Colonic mucosa (tissue), 4 donors: ENCODE measurements at regions of chr17 and their contacts with region 1.

Region 1: DNA sequence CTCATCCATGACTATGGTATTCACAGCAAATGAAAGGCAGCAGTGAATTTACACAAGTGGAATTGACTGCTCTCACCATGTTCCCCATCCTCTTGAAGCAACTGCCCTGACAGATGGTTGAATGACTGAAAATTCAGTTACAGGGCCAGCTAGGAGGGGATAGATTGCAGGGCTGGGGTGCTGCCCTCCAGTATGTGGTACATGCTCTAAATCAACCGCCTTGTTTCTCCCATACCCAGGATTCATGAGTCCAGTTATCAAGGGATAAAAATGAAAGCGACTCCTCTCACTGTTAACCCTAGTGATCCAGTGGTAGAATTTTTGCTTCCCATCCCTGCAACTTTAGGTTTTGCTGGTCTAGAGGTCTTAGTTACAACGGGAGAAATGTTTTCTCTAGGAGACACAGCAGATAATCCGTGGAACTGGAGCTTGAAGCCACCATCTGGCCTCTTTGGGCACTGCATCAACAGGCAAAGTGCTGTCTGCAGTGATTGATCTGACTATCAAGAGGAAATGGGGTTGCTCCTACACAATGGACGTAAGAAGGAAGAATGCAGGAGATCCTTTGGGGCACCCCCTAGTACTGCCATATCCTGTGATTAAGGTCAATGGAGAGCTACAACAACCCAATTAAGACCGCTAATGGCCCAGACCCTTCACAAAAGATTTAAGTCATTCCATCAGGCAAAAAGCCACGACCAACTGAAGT is 32.0 kb downstream of the SCPEP1 start:
- DNase-seq: peak; percentile 68
- H3K4me3 ChIP-seq: no peak overlapping the region
- H3K27ac ChIP-seq: no peak overlapping the region
- H3K4me1 ChIP-seq: no peaks in the 10 kb centered on the region
- H3K27me3 ChIP-seq: no peaks in the 10 kb centered on the region
- CTCF ChIP-seq: peak; percentile 66

Region 2: GRCh38 chr17:57051886-57052361 is 42.0 kb after region 1 on chr17:
- intact Hi-C with region 1: loop called (anchors 5 kb)
- DNase-seq: no peak
- H3K4me3 ChIP-seq: no peak overlapping the region
- H3K27ac ChIP-seq: no peak overlapping the region
- H3K4me1 ChIP-seq: peaks cover 6% of the 10 kb centered on the region
- H3K27me3 ChIP-seq: no peaks in the 10 kb centered on the region
- CTCF ChIP-seq: no peak

Region 3: GRCh38 chr17:57114085-57114673 is 104.3 kb after region 1 on chr17:
- intact Hi-C with region 1: loop called (anchors 10 kb)
- DNase-seq: peak; percentile 66
- H3K4me3 ChIP-seq: no peak overlapping the region
- H3K27ac ChIP-seq: no peak overlapping the region
- H3K4me1 ChIP-seq: peaks cover 3% of the 10 kb centered on the region
- H3K27me3 ChIP-seq: no peaks in the 10 kb centered on the region
- CTCF ChIP-seq: peak; percentile 91